Motor neuron (in vitro differentiated cells): ENCODE measurements at regions of chr5 and their contacts with region 1.

Region 1: GRCh38 chr5:39599721-39600431 is 175.1 kb upstream of the DAB2 start:
- ATAC-seq: peak in 3 of 8 experiments; percentile 33 to 66 (median 35)
- H3K4me3 ChIP-seq: no peak overlapping the region
- H3K27ac ChIP-seq: no peak overlapping the region
- H3K4me1 ChIP-seq: no peaks in the 10 kb centered on the region

Region 2: GRCh38 chr5:38948501-38948900 is 651.4 kb before region 1 on chr5:
- in situ Hi-C with region 1: no loop called
- ATAC-seq: no peak
- H3K4me3 ChIP-seq: no peak overlapping the region
- H3K27ac ChIP-seq: no peak overlapping the region
- H3K4me1 ChIP-seq: no peaks in the 10 kb centered on the region

Region 3: DNA sequence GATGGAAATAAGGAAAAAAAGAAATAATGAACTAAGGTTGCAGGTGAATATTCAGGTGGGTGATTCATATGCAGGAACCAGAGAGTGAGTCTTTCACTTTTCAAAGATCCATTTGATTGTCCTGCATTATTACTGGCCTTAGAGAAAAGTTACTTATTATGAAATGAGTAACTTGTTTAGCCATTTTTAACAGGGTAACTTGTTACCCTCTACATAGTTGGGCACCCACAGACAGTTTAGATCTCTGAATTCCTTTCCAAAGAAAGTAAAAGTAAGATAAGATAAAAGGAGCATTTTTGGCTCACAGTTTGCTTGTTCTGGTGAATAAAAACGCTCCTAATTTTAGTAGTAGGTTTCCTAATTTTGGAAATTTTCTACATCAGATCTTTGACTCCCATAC is 121.0 kb before region 1 on chr5:
- in situ Hi-C with region 1: no loop called
- ATAC-seq: no peak
- H3K4me3 ChIP-seq: no peak overlapping the region
- H3K27ac ChIP-seq: no peak overlapping the region
- H3K4me1 ChIP-seq: peaks cover 7 to 9% of the 10 kb centered on the region in 2 donors

Region 4: DNA sequence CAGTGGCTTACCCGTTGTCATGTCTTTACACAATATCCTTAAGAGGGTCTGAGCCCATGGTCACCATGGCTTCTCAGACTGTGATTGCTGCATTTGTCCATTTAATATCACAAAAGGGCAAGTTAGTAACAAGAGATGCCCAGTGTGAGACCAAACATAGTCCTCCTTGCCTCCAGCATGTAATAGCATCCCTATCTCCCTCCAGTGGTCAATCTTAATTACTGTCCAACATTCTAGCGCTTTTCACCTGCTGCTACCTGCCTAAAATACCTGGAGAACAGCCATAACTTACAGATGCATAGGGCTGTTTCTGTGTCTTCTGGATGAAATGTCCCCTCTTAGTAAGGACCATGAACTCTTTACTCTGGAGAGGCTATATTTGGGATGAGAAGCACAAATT is 92.1 kb after region 1 on chr5:
- in situ Hi-C with region 1: loop called in 1 of 9 experiments (anchors 10 kb)
- ATAC-seq: no peak
- H3K4me3 ChIP-seq: no peak overlapping the region
- H3K27ac ChIP-seq: no peak overlapping the region
- H3K4me1 ChIP-seq: no peaks in the 10 kb centered on the region

Region 5: DNA sequence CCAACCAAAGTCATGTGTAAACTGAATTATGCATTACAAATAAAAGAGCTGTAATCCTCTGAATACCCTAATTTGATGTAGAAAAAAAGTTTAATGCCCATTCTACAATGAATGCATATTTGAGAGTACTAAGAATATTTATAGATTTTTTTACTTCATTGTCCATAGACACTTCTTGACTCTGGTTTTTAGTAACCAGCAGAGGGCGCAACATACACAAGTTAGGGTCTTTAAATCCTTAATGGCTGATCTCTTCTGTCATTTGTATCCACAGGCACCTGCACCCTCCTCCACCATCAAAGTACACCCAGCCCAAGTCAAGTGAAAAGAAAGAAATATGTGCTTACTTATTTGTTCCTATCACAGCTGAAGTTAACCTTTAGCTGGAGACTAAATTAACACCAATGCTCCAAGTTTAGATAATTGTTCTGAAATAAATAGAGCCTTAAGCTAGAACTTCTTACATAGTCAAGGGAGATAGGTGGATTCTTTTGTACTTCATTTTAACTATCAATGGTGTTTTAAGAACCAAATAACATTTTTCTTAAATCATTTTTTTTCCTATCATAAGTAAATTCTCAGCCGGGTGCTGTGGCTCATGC is 349.1 kb after region 1 on chr5:
- in situ Hi-C with region 1: loop called in 2 of 9 experiments (anchors 25 kb)
- ATAC-seq: peak; percentile 27 to 99 (median 68)
- H3K4me3 ChIP-seq: no peak overlapping the region
- H3K27ac ChIP-seq: no peak overlapping the region
- H3K4me1 ChIP-seq: no peaks in the 10 kb centered on the region

Region 6: GRCh38 chr5:39970117-39970798 is 370.4 kb after region 1 on chr5:
- in situ Hi-C with region 1: loop called in 1 of 9 experiments (anchors 25 kb)
- ATAC-seq: no peak
- H3K4me3 ChIP-seq: no peak overlapping the region
- H3K27ac ChIP-seq: no peak overlapping the region
- H3K4me1 ChIP-seq: no peaks in the 10 kb centered on the region

Region 7: GRCh38 chr5:40688127-40688761 is 1088.4 kb after region 1 on chr5:
- in situ Hi-C with region 1: loop called in 2 of 9 experiments (anchors 25 kb)
- ATAC-seq: peak; percentile 77 to 97 (median 92)
- H3K4me3 ChIP-seq: no peak overlapping the region
- H3K27ac ChIP-seq: no peak overlapping the region
- H3K4me1 ChIP-seq: no peaks in the 10 kb centered on the region

Region 8: GRCh38 chr5:40736103-40736875 is 1136.4 kb after region 1 on chr5:
- in situ Hi-C with region 1: loop called in 4 of 9 experiments (anchors 25 kb)
- ATAC-seq: peak in 4 of 8 experiments; percentile 61 to 77 (median 66)
- H3K4me3 ChIP-seq: no peak overlapping the region
- H3K27ac ChIP-seq: no peak overlapping the region
- H3K4me1 ChIP-seq: no peaks in the 10 kb centered on the region

Region 9: GRCh38 chr5:40879163-40879942 is 1279.5 kb after region 1 on chr5:
- in situ Hi-C with region 1: loop called in 2 of 9 experiments (anchors 25 kb)
- ATAC-seq: peak in 3 of 8 experiments; percentile 38 to 51 (median 40)
- H3K4me3 ChIP-seq: no peak overlapping the region
- H3K27ac ChIP-seq: no peak overlapping the region
- H3K4me1 ChIP-seq: no peaks in the 10 kb centered on the region